Psoas muscle (tissue), 8 donors: ENCODE measurements at regions of chr16 and their contacts with region 1.

Region 1: DNA sequence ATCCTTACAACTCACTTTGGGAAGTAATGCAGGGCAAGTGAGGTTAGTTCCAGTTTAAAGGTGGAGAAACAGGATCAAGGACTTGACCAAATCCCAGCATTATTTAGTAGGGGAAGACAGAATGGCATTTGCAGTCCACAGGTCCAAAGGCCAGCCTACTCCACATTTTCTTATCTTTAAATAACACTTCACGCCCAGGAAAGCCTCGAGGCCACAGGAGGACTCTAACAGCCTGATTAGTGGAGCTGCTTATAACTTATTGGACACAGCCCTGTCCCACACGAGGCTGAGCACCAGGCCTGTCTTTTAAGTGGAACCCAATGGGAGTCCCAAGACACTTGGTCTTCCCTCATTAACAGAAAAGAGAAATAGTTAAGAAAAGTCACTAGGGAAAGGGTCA is 12.1 kb upstream of the HYDIN start:
- DNase-seq: no peak
- ATAC-seq: no peak
- H3K4me3 ChIP-seq: no peak overlapping the region
- H3K27ac ChIP-seq: no peak overlapping the region
- H3K4me1 ChIP-seq: no peaks in the 10 kb centered on the region
- H3K27me3 ChIP-seq: no peaks in the 10 kb centered on the region
- CTCF ChIP-seq: no peak

Region 2: GRCh38 chr16:71255721-71256120 is 13.1 kb after region 1 on chr16:
- intact Hi-C with region 1: loop called in 1 of 2 experiments (anchors 2 kb)
- DNase-seq: no peak
- ATAC-seq: peak in 2 of 4 donors; percentile 15 to 28
- H3K4me3 ChIP-seq: no peak overlapping the region
- H3K27ac ChIP-seq: no peak overlapping the region
- H3K4me1 ChIP-seq: no peaks in the 10 kb centered on the region
- H3K27me3 ChIP-seq: no peaks in the 10 kb centered on the region
- CTCF ChIP-seq: no peak

Region 3: GRCh38 chr16:71288569-71288889 is 45.9 kb after region 1 on chr16:
- intact Hi-C with region 1: no loop called
- DNase-seq: no peak
- ATAC-seq: no peak
- H3K4me3 ChIP-seq: peak overlapping the region; percentile 89
- H3K27ac ChIP-seq: peak overlapping the region; percentile 90
- H3K4me1 ChIP-seq: peaks cover 17% of the 10 kb centered on the region
- H3K27me3 ChIP-seq: peaks cover 0 to 3% (median 0%) of the 10 kb centered on the region in 3 donors
- CTCF ChIP-seq: no peak